ENCODE measurements at regions of chr10 and their contacts with region 1.

Region 1: GRCh38 chr10:110058212-110058611 is 50.4 kb downstream of the ADD3 start:
- DNase-seq: no peak
- ATAC-seq: peak; percentile 76 to 82
- H3K4me3 Mint-ChIP-seq: peak overlapping the region; percentile 34 to 86 (median 66)
- H3K27ac Mint-ChIP-seq: peak overlapping the region; percentile 46 to 98 (median 81)
- H3K4me1 Mint-ChIP-seq: peaks cover 34 to 87% (median 80%) of the 10 kb centered on the region in 4 donors
- H3K27me3 Mint-ChIP-seq: no peaks in the 10 kb centered on the region

Region 2: GRCh38 chr10:110076559-110077318 is 18.5 kb after region 1 on chr10:
- POLR2A ChIA-PET with region 1: interaction called, 10 read pairs
- DNase-seq: peak in 5 of 10 donors; percentile 28 to 68 (median 51)
- ATAC-seq: peak; percentile 68 to 80
- H3K4me3 Mint-ChIP-seq: peak overlapping the region; percentile 71 to 90 (median 84)
- H3K27ac Mint-ChIP-seq: peak overlapping the region; percentile 79 to 98 (median 91)
- H3K4me1 Mint-ChIP-seq: peaks cover 46 to 95% (median 89%) of the 10 kb centered on the region in 4 donors
- H3K27me3 Mint-ChIP-seq: no peaks in the 10 kb centered on the region

Region 3: DNA sequence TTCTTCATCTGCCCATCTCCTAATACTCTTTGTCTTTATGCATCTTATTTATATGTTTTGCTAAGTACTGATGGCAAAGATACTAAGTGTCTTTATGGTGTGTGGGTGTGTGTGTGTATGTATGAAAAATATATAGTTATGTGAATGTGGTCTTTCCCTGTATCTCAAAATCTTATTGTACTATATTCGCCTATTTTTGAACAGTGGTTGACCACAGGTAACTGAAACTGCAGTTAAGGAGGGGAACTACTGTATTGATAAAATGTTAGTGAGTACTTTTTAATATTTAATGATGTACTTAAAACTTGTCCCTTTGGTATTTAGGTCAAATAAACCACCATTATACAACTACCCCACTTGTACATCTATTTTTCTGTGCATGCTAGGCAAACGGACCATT is 35.5 kb after region 1 on chr10:
- POLR2A ChIA-PET with region 1: no interaction called
- DNase-seq: no peak
- ATAC-seq: no peak
- H3K4me3 Mint-ChIP-seq: peak overlapping the region in 1 of 10 donors; percentile 42
- H3K27ac Mint-ChIP-seq: peak overlapping the region in 2 of 10 donors; percentile 25 to 26
- H3K4me1 Mint-ChIP-seq: peaks cover 23 to 86% (median 66%) of the 10 kb centered on the region in 4 donors
- H3K27me3 Mint-ChIP-seq: no peaks in the 10 kb centered on the region